HEK293 (cell line): ENCODE measurements at regions of chr21 and their contacts with region 1.

Region 1: DNA sequence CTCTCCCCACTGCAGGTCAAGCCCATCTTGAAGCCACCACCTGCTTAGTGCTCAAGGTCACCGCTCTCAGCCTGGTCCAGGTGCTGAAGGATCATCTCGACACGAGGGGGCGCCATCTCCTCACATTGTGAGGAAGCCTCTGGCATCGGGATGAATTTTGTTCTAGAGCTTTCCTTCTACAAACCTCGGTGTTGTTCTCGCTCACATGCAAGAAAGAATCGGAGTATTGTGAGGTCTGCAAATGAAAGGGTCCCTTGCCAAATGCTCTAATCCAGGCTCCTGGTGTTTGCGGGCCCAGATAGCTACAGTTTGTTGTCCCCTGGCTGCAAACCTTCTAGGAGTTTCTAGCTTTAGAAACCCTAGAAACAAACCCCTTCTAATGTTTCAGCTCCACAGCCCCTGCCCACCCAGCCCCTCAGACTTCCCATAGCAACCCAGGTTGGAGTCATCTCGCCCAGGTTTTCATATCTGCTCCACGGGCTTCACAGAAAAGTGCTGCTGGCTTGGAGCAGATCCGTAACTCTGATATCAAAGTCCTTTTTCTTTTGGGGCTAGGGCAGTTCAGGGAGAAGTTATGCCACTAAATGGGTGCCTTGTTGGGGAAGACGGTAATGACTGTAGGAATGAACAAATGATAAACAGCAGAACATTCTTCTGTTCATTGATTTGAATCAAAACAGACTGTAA is 8.6 kb upstream of the ATP5PO start:
- H3K4me3 ChIP-seq: no peak overlapping the region
- H3K27ac ChIP-seq: no peak overlapping the region
- H3K4me1 ChIP-seq: no peaks in the 10 kb centered on the region
- CTCF ChIP-seq: peak; percentile 94

Region 2: DNA sequence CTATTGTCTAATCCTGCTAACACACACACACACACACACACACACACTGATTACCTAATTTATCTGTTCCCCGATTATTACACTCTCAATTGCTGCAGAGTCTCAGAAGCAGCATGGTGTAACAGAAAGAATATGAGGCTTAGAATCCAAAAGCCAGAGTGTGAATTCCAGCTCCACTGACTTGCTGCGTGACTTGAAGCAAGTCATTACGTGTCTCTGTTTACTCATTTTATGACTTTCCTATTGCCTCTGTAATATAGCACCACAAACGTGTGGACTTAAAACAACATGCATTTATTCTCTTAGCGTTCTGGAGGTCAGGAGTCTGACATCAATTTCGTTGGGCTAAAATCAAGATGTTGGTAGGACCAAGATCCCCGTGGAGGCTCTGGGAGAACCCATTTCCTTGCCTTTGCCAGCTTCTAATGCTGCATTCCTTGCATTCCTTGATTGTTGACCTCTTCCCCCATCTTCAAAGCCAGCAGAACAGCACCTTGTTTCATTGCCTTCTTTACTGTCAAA is 47.3 kb after region 1 on chr21:
- CTCF ChIA-PET with region 1: interaction called, 17 read pairs
- POLR2A ChIA-PET with region 1: no interaction called
- H3K4me3 ChIP-seq: no peak overlapping the region
- H3K27ac ChIP-seq: no peak overlapping the region
- H3K4me1 ChIP-seq: peaks cover 24% of the 10 kb centered on the region
- CTCF ChIP-seq: no peak

Region 3: DNA sequence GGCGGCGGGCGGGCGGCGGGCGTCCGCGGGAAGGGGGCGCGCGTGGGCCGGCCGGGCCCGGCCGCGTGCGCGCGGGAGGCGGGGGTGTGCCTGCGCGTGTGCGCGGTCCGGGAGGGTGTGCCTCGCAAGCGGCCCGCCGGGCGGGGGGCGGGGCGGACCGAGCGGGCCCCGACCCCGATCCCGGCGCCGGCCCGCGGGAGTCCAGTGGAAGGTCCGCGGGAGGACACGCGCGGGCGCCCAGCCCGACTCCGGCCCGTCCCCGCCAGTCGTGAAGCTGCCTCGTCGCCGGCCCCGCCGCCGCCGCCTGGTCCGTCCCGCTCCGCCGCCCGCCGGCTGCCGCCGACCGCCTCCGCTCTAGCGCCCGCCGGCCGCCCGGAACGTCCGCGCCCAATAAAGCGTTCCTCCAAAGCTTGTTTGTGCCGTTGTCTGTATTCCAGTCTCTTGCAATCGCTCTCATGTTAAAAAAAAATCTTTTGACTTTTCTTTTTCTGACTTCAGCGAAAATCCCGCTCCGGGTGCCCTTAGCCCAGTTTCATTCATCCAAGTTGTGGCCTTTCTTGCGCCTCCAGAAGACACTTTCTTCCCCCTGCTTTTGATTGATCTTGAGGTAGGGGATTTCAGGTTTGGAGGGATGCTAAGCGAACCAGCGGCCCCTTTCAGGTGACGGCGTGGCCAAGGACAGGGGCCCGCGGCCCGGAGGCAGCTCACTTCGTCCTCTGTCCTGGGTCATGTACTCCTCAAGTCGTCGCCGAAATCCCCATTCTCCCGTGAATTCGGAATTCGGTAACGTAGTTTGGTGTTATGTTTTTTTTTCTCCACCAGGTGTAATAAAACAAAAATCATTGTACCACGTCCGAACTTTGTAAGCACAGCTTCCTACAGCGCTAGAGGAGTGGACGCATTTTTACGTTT is 149.9 kb after region 1 on chr21:
- CTCF ChIA-PET with region 1: interaction called, 11 read pairs
- POLR2A ChIA-PET with region 1: interaction called, 3 read pairs
- H3K4me3 ChIP-seq: peak overlapping the region; percentile 89
- H3K27ac ChIP-seq: peak overlapping the region; percentile 79; the same call in 1 of the 2 replicates
- H3K4me1 ChIP-seq: peaks cover 2% of the 10 kb centered on the region; the same call in 1 of the 2 replicates
- CTCF ChIP-seq: no peak

Region 4: DNA sequence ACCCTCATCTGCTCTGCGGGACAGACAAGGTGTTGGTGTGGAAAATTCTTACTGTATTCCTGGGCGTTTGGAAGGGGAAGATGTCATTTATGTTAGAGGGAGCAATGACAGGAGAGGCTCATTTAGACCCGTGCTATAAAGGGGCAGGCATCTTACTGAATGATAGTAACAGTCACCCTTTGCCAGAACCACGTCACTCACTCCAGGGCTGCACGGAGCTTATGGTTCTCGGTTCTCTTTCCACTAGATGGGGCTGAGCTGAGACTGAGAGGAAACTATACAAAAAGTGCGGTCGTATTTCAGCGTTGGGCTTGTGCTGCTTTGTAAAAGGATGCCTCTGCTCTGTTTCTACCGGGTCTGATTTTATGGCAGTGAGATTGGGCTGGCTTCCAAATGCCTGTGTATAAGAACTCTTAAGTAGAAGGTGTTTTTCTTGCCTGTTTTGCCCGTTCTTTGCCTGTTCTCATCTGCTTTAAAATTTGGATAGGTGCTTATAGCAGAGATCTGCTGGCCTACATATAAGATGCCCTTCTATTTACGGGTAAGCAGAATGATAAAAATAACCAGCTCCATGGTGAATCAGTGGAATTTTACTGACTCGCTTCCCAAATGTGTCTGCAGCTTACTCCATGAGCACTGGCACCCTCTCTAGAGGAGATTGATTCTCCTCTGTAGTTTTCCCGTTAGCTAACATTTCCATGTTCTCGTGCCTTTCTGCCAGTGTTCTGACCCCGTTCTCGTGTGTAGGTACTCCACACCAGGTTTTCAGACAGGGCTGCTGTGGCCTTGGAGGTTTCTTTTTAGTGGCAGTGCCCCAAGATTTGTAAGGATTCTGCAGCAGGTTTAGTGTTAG is 205.0 kb after region 1 on chr21:
- CTCF ChIA-PET with region 1: interaction called, 12 read pairs
- POLR2A ChIA-PET with region 1: no interaction called
- H3K4me3 ChIP-seq: no peak overlapping the region
- H3K27ac ChIP-seq: peak overlapping the region; percentile 59
- H3K4me1 ChIP-seq: peaks cover 26% of the 10 kb centered on the region
- CTCF ChIP-seq: peak; percentile 74; the same call in 1 of the 2 replicates

Region 5: GRCh38 chr21:34243562-34243961 is 319.3 kb after region 1 on chr21:
- CTCF ChIA-PET with region 1: interaction called, 33 read pairs
- POLR2A ChIA-PET with region 1: no interaction called
- H3K4me3 ChIP-seq: no peak overlapping the region
- H3K27ac ChIP-seq: no peak overlapping the region
- H3K4me1 ChIP-seq: no peaks in the 10 kb centered on the region
- CTCF ChIP-seq: no peak

Region 6: DNA sequence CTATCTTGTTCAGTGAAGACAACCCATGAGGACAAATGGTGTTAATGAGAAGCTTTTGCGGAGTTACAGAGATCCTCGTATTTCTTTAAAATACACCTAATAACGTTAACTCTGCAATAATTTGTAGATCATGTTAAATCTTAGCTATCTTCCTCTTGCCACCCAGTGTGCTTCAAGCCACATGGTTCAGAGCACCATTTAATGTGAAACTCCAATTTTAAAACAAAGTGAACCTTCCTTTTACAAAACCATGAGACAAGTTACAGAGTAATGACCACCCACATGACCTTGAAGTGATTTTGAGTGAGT is 437.9 kb after region 1 on chr21:
- CTCF ChIA-PET with region 1: interaction called, 41 read pairs
- POLR2A ChIA-PET with region 1: no interaction called
- H3K4me3 ChIP-seq: no peak overlapping the region
- H3K27ac ChIP-seq: no peak overlapping the region
- H3K4me1 ChIP-seq: no peaks in the 10 kb centered on the region
- CTCF ChIP-seq: no peak

Region 7: DNA sequence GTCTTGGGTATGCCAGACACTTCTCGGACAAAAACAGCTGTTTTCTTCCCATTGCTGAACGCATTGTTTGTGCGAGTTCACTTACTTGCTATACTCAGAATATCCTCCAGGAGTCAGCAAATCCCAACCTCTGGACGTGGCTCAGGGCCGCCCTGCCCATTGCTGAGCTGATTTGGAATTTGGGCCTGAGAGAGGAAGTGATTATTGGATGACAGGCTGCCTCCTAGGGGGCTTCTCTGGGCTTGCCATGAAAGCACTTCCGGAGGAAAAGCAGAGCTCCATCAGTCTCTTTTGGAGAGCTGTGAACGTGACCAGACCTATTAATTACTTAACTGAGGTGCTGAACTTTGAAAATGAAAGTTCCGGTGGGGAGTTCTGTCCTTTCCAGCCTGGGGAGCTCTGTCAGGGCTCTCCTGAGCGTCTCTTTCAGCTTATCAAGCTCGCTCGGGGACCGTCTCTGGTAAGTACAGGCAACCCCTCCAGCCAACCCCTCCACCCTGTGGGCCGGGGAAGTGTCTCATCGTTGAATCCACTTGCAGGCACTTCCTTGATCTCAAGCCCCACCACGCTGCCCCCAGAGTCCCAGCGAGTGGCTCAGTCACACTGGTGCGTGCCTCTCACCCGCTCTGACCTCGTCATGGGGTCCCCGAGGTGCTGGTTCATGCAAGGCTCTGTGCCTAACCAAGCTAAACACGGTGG is 821.5 kb after region 1 on chr21:
- CTCF ChIA-PET with region 1: no interaction called
- POLR2A ChIA-PET with region 1: no interaction called
- H3K4me3 ChIP-seq: no peak overlapping the region
- H3K27ac ChIP-seq: no peak overlapping the region
- H3K4me1 ChIP-seq: no peaks in the 10 kb centered on the region
- CTCF ChIP-seq: peak; percentile 69; the same call in 1 of the 2 replicates